ENCODE measurements at regions of chr18 and their contacts with region 1.

Region 1: DNA sequence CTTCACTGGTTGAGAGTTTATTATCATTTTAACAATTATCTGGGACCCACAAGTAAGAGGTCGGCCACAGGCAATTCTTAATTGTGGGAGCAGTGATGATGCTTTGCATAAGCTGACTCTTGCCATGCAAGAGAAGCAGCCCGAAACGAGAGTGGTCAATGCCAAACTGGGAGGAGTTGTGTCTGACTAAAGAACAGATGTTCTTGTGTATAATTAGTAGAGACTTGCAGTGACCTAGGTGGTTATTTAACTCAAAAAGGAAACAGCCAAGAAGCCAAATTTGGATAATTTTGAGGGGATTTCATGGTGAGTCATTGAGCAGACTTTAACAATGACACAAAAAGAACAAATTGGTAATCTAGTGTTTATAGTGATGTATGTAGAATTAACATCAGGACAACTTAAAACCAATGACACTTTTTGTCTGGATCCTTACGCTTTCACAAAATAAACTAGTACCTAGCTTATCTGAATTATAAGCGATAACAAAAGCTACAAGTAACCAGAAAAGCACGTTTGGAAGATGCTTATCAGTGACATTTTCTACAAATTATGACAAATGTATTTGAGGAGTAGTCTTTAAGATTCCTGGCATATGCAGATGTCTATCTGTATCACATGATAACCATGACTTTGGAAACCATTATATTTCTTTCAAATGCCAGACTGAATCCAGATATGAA is 184.7 kb upstream of the DLGAP1 start:
- DNase-seq: peak; percentile 97
- ATAC-seq: peak; percentile 93
- H3K4me3 ChIP-seq: no peak overlapping the region
- H3K27ac ChIP-seq: peak overlapping the region; percentile 66
- H3K4me1 ChIP-seq: peaks cover 3% of the 10 kb centered on the region
- H3K27me3 ChIP-seq: no peaks in the 10 kb centered on the region
- CTCF ChIP-seq: no peak
- EP300 ChIP-seq: peak; percentile 96 to 97
- POLR2A ChIP-seq: no peak
- RAD21 ChIP-seq: no peak

Region 2: GRCh38 chr18:4096486-4096885 is 543.3 kb before region 1 on chr18:
- CTCF ChIA-PET with region 1: no interaction called
- POLR2A ChIA-PET with region 1: interaction called, 11 read pairs
- RAD21 ChIA-PET with region 1: interaction called, 6 read pairs
- SMC1A ChIA-PET with region 1: interaction called, 3 read pairs
- in situ Hi-C with region 1: no loop called
- intact Hi-C with region 1: loop called (anchors 10 kb)
- DNase-seq: no peak
- ATAC-seq: no peak
- H3K4me3 ChIP-seq: no peak overlapping the region
- H3K27ac ChIP-seq: no peak overlapping the region
- H3K4me1 ChIP-seq: no peaks in the 10 kb centered on the region
- H3K27me3 ChIP-seq: no peaks in the 10 kb centered on the region
- CTCF ChIP-seq: no peak
- EP300 ChIP-seq: no peak
- POLR2A ChIP-seq: no peak
- RAD21 ChIP-seq: no peak

Region 3: GRCh38 chr18:4236940-4237663 is 402.7 kb before region 1 on chr18:
- CTCF ChIA-PET with region 1: no interaction called
- POLR2A ChIA-PET with region 1: no interaction called
- RAD21 ChIA-PET with region 1: no interaction called
- SMC1A ChIA-PET with region 1: interaction called, 4 read pairs
- in situ Hi-C with region 1: no loop called
- intact Hi-C with region 1: loop called (anchors 10 kb)
- DNase-seq: no peak
- ATAC-seq: peak; percentile 77
- H3K4me3 ChIP-seq: no peak overlapping the region
- H3K27ac ChIP-seq: no peak overlapping the region
- H3K4me1 ChIP-seq: no peaks in the 10 kb centered on the region
- H3K27me3 ChIP-seq: no peaks in the 10 kb centered on the region
- CTCF ChIP-seq: no peak
- EP300 ChIP-seq: peak; percentile 28 to 41; a peak in 1 of 4 replicates
- POLR2A ChIP-seq: no peak
- RAD21 ChIP-seq: no peak

Region 4: DNA sequence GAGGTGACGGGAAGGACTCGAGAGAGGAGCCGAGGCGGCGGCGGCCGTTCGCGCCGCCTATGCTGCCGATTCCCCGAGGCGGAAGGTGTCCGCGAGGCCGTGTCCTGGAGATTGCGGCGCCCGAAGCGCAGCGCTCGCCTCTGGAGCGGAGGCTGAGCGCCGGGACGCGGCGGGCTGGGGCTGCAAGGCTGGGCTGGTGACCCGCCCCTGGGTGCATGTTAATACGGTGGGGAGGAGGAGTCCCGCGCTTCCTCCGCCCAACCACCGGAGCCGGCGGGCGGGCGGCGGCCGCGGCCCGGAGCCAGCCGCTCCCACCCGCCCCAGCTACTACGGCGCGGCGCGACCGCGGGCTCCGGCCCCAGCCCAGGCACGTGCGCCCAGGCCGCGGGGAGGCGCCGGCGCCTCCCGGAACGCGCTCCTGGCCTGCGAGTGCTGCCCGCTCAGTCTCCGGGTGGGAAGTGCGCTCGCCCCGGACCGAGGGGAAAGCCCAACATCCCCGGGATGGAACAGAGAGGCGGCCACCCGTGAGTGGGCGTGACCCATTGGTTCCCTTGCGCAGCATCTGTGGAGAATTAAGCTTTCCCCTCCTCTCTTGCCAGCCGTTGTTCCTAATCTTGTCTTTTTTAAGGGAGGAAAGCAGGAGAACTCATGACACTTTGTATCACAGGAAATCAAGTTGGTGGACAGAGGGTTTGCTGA is 184.5 kb before region 1 on chr18 and contains the start of gene DLGAP1:
- CTCF ChIA-PET with region 1: interaction called, 15 read pairs
- POLR2A ChIA-PET with region 1: interaction called, 4 read pairs
- RAD21 ChIA-PET with region 1: interaction called, 39 read pairs
- SMC1A ChIA-PET with region 1: interaction called, 33 read pairs
- in situ Hi-C with region 1: no loop called
- intact Hi-C with region 1: loop called (anchors 5 kb)
- DNase-seq: no peak
- ATAC-seq: peak; percentile 85
- H3K4me3 ChIP-seq: no peak within 1 kb of the TSS
- H3K27ac ChIP-seq: no peak within 1 kb of the TSS
- H3K4me1 ChIP-seq: no peaks in the 10 kb centered on the region
- H3K27me3 ChIP-seq: no peaks in the 10 kb centered on the region; a peak in 1 of 4 replicates
- CTCF ChIP-seq: peak in 1 of 3 experiments; percentile 23; a peak in 1 of 6 replicates
- EP300 ChIP-seq: no peak
- POLR2A ChIP-seq: 0 out of 2 replicates have a peak, but pooled peaks have one; percentile 23
- RAD21 ChIP-seq: no peak
- polyA plus RNA-seq, gene DLGAP1: 0.23 to 0.60 TPM

Region 5: GRCh38 chr18:4658804-4659203 is 19.0 kb after region 1 on chr18:
- CTCF ChIA-PET with region 1: no interaction called
- POLR2A ChIA-PET with region 1: interaction called, 3 read pairs
- RAD21 ChIA-PET with region 1: no interaction called
- SMC1A ChIA-PET with region 1: interaction called, 16 read pairs
- in situ Hi-C with region 1: no loop called
- intact Hi-C with region 1: no loop called
- DNase-seq: no peak
- ATAC-seq: no peak
- H3K4me3 ChIP-seq: no peak overlapping the region
- H3K27ac ChIP-seq: no peak overlapping the region
- H3K4me1 ChIP-seq: no peaks in the 10 kb centered on the region
- H3K27me3 ChIP-seq: no peaks in the 10 kb centered on the region
- CTCF ChIP-seq: no peak
- EP300 ChIP-seq: no peak
- POLR2A ChIP-seq: no peak
- RAD21 ChIP-seq: no peak

Region 6: DNA sequence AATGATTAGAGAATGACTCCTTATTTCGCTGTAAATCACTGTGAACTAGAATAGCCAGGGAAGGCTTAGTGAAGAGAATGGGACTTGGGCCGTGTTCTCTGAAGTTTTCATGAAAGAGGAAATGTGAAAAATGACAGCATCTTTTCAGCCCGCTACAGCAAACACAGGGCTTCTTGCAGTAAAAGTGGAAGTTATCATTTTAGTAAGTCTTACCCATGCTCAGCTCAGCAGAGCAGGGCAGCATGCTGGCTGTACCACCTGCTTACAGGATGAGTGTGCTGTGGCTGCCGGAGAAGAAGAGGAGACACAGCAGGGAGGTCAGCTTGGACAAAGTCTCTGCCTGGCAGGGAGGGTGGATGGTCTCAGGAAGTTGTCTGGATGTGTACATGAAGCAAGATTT is 116.1 kb after region 1 on chr18:
- CTCF ChIA-PET with region 1: interaction called, 4 read pairs
- POLR2A ChIA-PET with region 1: interaction called, 4 read pairs
- RAD21 ChIA-PET with region 1: interaction called, 13 read pairs
- SMC1A ChIA-PET with region 1: interaction called, 20 read pairs
- in situ Hi-C with region 1: no loop called
- intact Hi-C with region 1: loop called (anchors 2 kb)
- DNase-seq: peak; percentile 71
- ATAC-seq: peak; percentile 92
- H3K4me3 ChIP-seq: no peak overlapping the region
- H3K27ac ChIP-seq: no peak overlapping the region
- H3K4me1 ChIP-seq: no peaks in the 10 kb centered on the region; the same call in 1 of the 2 replicates
- H3K27me3 ChIP-seq: no peaks in the 10 kb centered on the region
- CTCF ChIP-seq: no peak
- EP300 ChIP-seq: peak in 1 of 2 experiments; percentile 59; a peak in 1 of 4 replicates
- POLR2A ChIP-seq: no peak
- RAD21 ChIP-seq: no peak

Region 7: DNA sequence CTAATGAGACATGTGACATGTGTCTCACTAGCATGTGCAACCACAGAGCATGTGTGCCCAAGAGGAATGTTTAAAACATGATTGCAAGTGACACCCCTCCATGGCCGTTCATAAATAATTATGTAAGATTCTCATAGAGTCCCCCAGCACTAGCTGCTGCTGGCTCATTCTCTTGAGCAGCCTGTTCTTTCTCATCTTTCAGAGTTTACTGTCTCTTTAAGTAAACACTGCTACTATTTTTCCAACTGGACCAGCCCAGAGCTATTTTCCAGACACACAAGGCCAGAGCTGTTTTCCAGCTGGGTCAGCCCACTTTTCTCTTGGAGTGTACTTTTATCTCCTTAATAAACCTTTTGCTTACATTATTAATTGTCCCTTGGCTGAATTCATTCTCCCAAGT is 142.1 kb after region 1 on chr18:
- CTCF ChIA-PET with region 1: no interaction called
- POLR2A ChIA-PET with region 1: no interaction called
- RAD21 ChIA-PET with region 1: no interaction called
- SMC1A ChIA-PET with region 1: no interaction called
- in situ Hi-C with region 1: no loop called
- intact Hi-C with region 1: no loop called
- DNase-seq: no peak
- ATAC-seq: no peak
- H3K4me3 ChIP-seq: no peak overlapping the region
- H3K27ac ChIP-seq: no peak overlapping the region
- H3K4me1 ChIP-seq: no peaks in the 10 kb centered on the region
- H3K27me3 ChIP-seq: no peaks in the 10 kb centered on the region
- CTCF ChIP-seq: no peak
- EP300 ChIP-seq: no peak
- POLR2A ChIP-seq: no peak
- RAD21 ChIP-seq: no peak

Region 8: GRCh38 chr18:4842287-4842686 is 202.5 kb after region 1 on chr18:
- CTCF ChIA-PET with region 1: no interaction called
- POLR2A ChIA-PET with region 1: no interaction called
- RAD21 ChIA-PET with region 1: no interaction called
- SMC1A ChIA-PET with region 1: no interaction called
- in situ Hi-C with region 1: no loop called
- intact Hi-C with region 1: no loop called
- DNase-seq: no peak
- ATAC-seq: no peak
- H3K4me3 ChIP-seq: no peak overlapping the region
- H3K27ac ChIP-seq: no peak overlapping the region
- H3K4me1 ChIP-seq: no peaks in the 10 kb centered on the region
- H3K27me3 ChIP-seq: no peaks in the 10 kb centered on the region
- CTCF ChIP-seq: no peak
- EP300 ChIP-seq: no peak
- POLR2A ChIP-seq: no peak
- RAD21 ChIP-seq: no peak

Region 9: GRCh38 chr18:5029592-5029991 is 389.8 kb after region 1 on chr18:
- CTCF ChIA-PET with region 1: interaction called, 4 read pairs
- POLR2A ChIA-PET with region 1: no interaction called
- RAD21 ChIA-PET with region 1: no interaction called
- SMC1A ChIA-PET with region 1: interaction called, 29 read pairs
- in situ Hi-C with region 1: no loop called
- intact Hi-C with region 1: loop called (anchors 10 kb)
- DNase-seq: no peak
- ATAC-seq: peak; percentile 79
- H3K4me3 ChIP-seq: no peak overlapping the region
- H3K27ac ChIP-seq: no peak overlapping the region
- H3K4me1 ChIP-seq: no peaks in the 10 kb centered on the region
- H3K27me3 ChIP-seq: no peaks in the 10 kb centered on the region
- CTCF ChIP-seq: no peak
- EP300 ChIP-seq: no peak
- POLR2A ChIP-seq: no peak
- RAD21 ChIP-seq: no peak